ENCODE measurements at regions of chr7 and their contacts with region 1.

Region 1: DNA sequence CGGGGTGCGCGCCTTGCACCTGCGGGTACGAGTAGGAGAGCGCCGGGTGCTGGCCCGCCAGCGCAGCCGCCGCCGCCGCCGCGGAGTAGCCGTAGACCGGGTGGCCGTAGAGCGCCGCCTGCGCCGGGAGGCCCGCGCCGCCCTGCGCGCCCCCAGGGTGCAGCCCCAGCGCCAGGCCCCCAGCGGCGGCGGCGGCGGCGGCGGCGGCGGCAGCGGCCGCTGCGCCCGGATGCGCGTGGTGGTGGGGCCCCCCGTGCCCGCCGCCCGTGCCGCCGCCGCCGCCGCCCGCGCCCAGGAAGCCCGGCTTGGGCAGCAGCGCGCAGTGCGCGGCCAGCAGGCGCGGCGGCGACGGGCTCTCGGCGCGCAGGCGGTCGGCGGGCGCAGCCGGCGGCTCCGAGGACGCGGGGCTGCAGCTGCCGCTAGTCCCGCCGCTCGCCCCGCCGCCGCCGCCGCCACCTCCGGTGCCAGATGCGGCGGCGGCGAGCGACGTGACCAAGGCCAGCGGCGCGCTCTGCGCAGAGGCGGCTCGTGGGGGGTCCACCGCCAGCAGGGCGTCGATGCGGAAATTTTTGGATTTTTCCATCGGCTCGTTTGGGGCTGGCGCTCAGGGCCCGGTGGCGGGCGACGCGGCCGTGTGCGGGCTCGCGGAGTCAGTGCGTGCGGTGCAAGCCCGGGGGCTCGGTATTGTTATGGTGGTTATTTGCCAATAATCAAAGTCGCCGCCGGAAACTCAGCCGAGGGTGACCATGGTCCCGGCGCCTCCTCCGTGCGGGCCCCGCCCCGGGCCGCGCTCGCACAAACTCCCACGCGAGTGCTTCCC is 485 bp downstream of the MNX1 start:
- DNase-seq: no peak
- ATAC-seq: peak; percentile 43
- H3K4me3 ChIP-seq: peak overlapping the region; percentile 43 to 91
- H3K27ac ChIP-seq: peak overlapping the region; percentile 72 to 94 (median 83)
- H3K4me1 ChIP-seq: peaks cover 49% of the 10 kb centered on the region
- H3K27me3 ChIP-seq: no peaks in the 10 kb centered on the region
- CTCF ChIP-seq: no peak
- POLR2A ChIP-seq: peak in 1 of 3 donors; percentile 74

Region 2: GRCh38 chr7:156113733-156114132 is 896.2 kb before region 1 on chr7:
- intact Hi-C with region 1: no loop called
- DNase-seq: no peak
- ATAC-seq: no peak
- H3K4me3 ChIP-seq: no peak overlapping the region
- H3K27ac ChIP-seq: no peak overlapping the region
- H3K4me1 ChIP-seq: no peaks in the 10 kb centered on the region
- H3K27me3 ChIP-seq: no peaks in the 10 kb centered on the region
- CTCF ChIP-seq: no peak
- POLR2A ChIP-seq: no peak

Region 3: DNA sequence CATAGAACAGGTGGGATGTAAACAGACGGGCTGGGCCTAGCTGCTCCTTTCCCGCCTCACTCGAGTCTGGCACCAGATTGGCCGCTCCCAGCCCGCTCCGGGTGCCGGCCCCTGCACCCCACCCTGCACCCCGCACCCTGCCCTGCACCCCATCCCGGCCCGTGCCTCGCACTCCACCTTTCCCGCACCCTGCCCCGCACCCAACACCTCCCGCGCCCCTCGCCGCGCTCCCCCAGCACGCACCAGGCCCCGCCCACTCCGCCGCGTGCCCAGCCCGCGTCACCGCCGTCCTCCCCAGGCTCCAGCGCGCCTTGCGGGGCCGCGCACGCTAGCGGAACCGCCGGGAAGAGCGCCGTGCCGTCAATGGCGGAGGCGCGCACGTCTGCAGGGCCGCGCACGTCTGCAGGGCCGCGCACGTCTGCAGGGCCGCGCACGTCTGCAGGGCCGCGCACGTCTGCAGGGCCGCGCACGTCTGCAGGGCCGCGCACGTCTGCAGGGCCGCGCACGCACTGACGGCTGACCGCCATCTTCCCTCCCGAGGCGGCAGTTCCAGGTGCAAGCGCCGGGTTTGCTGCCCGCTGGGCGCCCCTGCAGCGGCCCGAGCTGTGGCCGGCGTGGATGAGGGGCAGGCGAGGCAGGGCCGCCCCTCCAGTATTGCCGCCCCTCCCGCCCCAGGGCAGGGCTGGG is 128.6 kb after region 1 on chr7 and contains the start of gene UBE3C:
- intact Hi-C with region 1: loop called (anchors 10 kb)
- DNase-seq: peak; percentile 88 to 92 (median 90)
- ATAC-seq: peak; percentile 94
- H3K4me3 ChIP-seq: peak within 1 kb of the TSS; percentile 35 to 86
- H3K27ac ChIP-seq: peak within 1 kb of the TSS; percentile 88 to 97 (median 94)
- H3K4me1 ChIP-seq: peaks cover 47% of the 10 kb centered on the region
- H3K27me3 ChIP-seq: no peaks in the 10 kb centered on the region
- CTCF ChIP-seq: peak in 2 of 7 experiments; percentile 11 to 26
- POLR2A ChIP-seq: peak; percentile 34 to 79 (median 53)
- total RNA-seq, gene UBE3C: 35.8 to 35.9 TPM

Region 4: DNA sequence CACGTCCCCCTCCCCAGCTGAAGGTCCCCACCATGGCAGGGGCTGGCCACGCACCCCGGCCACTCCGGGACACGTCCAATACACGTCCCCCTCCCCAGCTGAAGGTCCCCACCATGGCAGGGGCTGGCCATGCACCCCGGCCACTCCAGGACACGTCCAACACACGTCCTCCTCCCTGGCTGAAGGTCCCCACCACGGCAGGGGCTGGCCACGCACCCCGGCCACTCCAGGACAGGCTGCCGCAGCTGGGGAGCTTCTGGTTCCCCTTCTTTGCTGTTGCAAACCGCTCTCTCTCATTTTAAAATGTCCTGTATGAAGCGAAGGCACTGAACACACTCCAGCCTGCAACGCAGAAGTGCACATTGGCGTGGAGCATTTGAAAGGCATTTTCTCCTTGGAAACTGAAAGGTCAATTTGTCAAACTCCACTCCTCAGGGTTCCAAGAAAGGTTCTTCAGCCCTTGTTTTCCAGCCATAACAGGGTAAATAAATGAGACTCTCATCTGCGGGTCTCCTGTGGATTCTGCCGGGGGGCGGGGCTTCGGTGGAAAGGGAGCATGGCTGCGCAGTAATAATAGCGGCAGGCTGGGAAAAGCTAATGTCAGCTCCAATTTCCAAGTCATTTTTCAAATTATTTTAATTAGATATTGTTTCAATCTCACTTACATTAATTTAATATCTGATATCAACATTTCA is 907.1 kb after region 1 on chr7:
- intact Hi-C with region 1: no loop called
- DNase-seq: no peak
- ATAC-seq: no peak
- H3K4me3 ChIP-seq: no peak overlapping the region
- H3K27ac ChIP-seq: no peak overlapping the region
- H3K4me1 ChIP-seq: no peaks in the 10 kb centered on the region
- H3K27me3 ChIP-seq: no peaks in the 10 kb centered on the region
- CTCF ChIP-seq: no peak
- POLR2A ChIP-seq: no peak